ENCODE measurements at regions of chrX and their contacts with region 1.

Region 1: DNA sequence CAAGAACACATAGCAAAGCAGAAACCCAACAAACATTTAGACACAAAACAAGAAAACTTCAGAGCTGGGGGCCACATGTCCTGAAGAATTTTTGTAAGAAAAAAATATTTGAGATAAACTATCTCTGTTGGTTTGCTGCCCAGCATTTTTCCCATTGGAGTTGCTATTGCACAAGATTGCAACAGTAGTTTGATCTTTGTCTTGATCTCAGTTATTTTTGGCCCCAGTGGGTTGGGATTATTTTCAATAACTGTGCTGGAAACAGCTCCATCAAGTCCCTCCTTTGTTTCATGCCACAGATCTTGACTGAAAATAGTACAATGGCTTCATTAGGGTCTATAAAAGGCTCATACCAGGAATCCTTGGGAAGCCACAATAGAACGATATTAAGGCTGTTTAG is 103.8 kb upstream of the RAI2 start:
- DNase-seq: no peak
- H3K4me3 ChIP-seq: no peak overlapping the region
- H3K27ac ChIP-seq: no peak overlapping the region
- H3K4me1 ChIP-seq: no peaks in the 10 kb centered on the region
- H3K27me3 ChIP-seq: peaks cover under 1% of the 10 kb centered on the region
- CTCF ChIP-seq: no peak

Region 2: DNA sequence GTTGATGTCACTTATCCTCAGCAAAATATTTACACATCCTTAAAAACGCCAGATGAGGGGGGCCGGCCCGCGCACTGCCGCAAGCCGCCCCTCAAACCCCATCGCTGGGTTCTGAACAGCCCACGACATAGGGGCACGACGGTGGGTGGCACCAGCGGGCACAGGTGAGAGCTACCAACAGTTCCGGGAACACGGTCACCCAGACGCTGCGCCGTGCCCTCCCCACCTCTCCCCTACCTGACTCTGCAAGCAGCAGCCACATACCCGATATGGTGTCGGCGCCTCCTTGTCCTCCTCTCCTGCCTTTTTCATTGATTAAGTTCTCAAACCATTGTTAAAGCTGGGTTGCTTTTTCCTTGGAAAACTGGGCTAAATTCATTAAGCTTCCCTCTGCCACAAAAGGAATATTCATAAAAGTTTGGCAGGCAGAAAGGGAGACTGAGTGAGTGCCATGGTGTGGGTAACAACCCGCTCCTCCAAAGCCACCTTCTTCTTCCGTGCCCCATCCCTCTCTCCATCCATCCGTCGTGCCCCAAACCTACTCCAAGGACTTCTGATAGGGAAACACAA is 105.2 kb before region 1 on chrX:
- CTCF ChIA-PET with region 1: no interaction called
- dilution Hi-C with region 1: loop called (anchors 5 kb)
- in situ Hi-C with region 1: no loop called
- intact Hi-C with region 1: no loop called
- DNase-seq: no peak
- H3K4me3 ChIP-seq: no peak overlapping the region
- H3K27ac ChIP-seq: no peak overlapping the region
- H3K4me1 ChIP-seq: no peaks in the 10 kb centered on the region
- H3K27me3 ChIP-seq: peaks cover 25% of the 10 kb centered on the region
- CTCF ChIP-seq: no peak